RWPE1 (cell line): ENCODE measurements at regions of chr12 and their contacts with region 1.

Region 1: DNA sequence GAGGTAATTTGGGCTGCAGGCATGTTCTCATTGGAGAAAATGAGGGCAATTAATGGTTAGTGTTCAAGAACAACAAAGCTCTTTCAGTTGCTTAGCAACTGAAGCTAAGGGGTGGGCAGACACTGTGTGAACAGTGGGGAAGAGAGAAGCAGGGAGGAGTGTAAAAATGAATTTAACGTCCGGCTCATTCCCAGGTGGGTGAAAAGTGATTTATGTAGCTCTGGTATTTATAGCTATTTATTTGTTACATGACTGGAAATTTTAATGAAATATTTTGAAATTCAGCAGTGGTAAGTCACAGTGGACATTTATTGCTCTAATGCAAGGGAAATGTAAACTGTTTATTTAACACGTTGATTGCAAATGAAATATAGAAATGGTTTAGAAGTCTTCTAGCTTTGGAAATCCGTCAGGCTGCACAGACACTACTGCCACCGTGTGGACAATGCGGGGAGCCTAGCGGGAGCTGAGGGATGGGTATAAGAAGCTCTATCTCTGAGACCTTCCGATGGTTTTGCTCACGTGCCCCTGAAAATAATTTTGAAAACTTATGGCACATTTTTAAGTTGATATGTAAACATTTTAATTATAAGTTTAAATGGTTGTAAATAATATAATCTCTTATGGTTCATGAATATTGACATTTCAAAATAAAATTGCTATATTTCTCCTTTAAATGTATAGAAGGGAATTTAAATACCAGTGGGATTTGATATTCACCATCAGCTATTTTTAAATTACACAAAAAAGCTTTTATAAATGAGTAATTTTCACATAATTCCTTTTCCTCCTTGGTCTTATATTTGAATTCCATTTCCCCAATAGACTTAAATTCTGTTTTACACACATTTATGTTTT is 54.4 kb downstream of the E2F7 start:
- DNase-seq: peak; percentile 74
- H3K27ac ChIP-seq: no peak overlapping the region
- CTCF ChIP-seq: peak; percentile 96

Region 2: GRCh38 chr12:76952995-76953394 is 57.9 kb before region 1 on chr12:
- CTCF ChIA-PET with region 1: interaction called, 46 read pairs
- POLR2A ChIA-PET with region 1: no interaction called
- DNase-seq: peak; percentile 60
- H3K27ac ChIP-seq: no peak overlapping the region
- CTCF ChIP-seq: no peak

Region 3: DNA sequence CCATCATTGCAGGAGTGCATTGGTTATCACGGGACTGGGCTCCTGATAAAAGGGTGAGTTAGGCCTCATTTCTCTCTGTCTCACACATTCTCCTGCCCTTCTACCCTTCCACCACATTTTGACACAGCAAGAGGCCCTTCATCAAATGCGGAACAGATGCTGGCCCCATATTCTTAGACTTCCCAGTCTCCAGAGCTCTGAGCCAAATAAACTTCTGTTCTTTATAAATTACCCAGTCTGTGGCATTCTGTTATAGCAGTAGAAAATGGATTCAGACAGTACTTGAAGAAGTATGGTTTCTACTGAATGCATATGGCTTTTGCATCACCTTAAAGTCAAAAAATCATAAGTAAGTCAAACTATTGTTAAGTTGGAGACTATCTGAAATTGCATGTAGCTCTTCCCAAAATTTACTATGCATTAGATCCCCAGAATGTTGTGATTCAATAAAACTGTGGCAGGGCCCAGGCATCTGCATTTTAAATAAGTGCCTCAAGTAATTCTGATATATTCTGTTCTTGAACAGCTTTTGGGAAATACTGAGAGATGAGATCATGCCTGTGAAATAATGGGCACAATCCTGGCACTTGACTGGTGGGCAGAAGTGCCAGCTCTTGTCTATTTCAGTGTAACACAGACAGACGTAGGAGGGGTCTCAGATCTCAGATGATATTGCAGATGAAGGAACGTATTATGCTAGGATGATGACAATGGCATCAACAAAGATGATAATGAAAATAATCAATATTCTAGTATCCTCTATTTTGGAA is 13.7 kb before region 1 on chr12:
- CTCF ChIA-PET with region 1: interaction called, 10 read pairs
- POLR2A ChIA-PET with region 1: no interaction called
- DNase-seq: no peak
- H3K27ac ChIP-seq: no peak overlapping the region
- CTCF ChIP-seq: no peak

Region 4: GRCh38 chr12:77072833-77073495 is 62.0 kb after region 1 on chr12:
- CTCF ChIA-PET with region 1: no interaction called
- POLR2A ChIA-PET with region 1: no interaction called
- DNase-seq: no peak
- H3K27ac ChIP-seq: no peak overlapping the region
- CTCF ChIP-seq: no peak